ENCODE measurements at regions of chr12 and their contacts with region 1.

Region 1: DNA sequence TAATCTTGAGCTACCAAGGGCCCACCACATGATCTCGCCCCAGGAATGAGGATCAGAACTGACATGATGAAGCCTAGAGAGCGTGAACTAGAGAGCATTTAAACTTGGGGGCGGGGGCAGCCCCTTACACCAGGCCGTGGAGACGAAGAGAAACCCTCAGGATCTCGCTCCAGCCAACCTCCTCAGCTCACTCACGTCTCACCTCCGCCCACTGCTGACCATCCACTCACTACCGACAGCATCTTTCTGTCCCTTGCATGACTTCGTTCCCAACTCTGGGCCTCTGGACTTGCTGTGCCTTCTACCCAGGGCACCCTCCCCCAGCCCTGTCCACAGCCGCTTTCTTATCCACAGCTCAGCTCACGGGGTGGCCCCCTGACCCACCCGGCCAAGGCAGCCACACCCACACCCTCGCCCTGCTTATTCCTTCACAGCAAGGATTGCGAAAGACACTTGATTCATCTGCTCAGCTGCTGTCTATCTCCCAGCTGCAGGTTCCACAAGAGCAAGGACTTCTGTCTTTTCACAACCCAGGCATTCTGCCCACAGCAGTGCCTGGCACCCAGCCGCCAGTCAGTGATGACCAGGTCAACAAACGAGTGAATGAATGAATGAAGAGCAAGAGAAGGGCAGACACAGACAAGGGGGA is 6.4 kb downstream of the STX2 start:
- DNase-seq: peak; percentile 80
- H3K4me3 Mint-ChIP-seq: peak overlapping the region; percentile 5
- H3K27ac Mint-ChIP-seq: no peak overlapping the region
- H3K4me1 Mint-ChIP-seq: peaks cover 19% of the 10 kb centered on the region
- H3K27me3 Mint-ChIP-seq: no peaks in the 10 kb centered on the region
- CTCF ChIP-seq: no peak

Region 2: DNA sequence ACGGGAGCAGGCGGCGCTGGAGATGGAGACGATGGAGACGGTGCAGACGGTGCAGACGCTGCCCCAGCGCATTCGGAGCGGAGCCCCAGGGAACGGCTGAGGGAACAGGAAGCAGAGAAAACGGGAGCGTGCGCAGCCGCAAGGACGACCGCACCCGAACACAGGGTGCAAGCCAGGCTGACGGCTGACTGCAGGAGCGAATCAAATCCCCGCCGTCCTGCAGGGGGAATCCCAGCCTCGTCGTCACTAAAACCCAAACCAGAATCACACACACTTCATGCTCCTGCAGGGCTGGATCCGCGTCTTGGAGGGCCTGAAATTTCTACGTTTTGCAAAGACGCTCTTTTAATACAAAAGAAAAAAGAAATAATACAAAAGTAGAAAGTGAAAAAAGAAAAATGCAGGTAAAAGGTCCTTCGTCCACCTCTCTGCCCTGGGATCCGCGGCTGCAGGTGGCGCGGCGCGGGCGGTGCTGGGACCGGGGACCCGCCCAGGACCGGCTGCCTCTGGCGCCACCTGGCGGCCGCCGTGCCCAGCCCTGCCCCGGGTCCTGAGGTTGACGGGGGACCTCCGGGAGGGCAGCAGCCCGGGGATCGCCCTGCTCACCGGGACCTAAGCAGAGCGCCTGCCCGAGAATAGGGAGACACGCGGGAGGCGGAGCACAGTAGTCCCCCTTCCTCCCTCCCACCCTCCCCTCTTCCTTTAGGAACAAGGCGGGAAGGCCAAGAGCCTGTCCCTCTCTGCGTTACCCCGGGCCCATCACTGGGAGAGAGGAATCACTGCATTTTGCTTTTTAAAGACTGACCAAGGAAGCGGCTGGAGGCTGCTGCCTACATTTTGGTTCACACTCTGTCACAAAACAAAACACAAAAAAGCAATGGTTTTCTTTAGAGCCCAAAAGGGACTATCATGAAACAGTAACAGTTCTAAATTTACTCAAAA is 13.8 kb before region 1 on chr12:
- CTCF ChIA-PET with region 1: interaction called, 10 read pairs
- POLR2A ChIA-PET with region 1: interaction called, 3 read pairs
- intact Hi-C with region 1: no loop called
- DNase-seq: peak; percentile 36
- H3K4me3 Mint-ChIP-seq: peak overlapping the region; percentile 69
- H3K27ac Mint-ChIP-seq: peak overlapping the region; percentile 49
- H3K4me1 Mint-ChIP-seq: peaks cover 4% of the 10 kb centered on the region
- H3K27me3 Mint-ChIP-seq: no peaks in the 10 kb centered on the region
- CTCF ChIP-seq: peak; percentile 83

Region 3: DNA sequence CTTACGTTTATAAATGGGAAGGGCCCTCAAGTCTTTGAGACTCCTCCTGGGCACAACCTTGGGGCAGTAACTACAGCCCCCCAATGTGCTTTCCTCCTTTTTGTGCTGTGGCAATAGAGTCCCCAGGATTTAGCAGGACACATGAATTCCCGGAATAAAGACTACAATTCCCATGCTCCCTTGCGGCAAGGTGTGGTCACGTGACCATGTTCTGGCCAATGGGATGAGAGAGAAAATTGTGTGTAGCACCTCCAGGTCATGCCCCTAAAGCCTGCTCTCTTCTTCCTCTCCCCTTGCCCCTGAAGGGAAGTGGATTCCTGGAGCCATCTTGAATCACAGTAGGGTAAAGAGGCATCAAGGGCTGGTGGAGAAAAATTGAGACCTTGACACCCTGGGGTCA is 583.1 kb after region 1 on chr12:
- CTCF ChIA-PET with region 1: no interaction called
- POLR2A ChIA-PET with region 1: no interaction called
- intact Hi-C with region 1: no loop called
- DNase-seq: peak; percentile 38
- H3K4me3 Mint-ChIP-seq: no peak overlapping the region
- H3K27ac Mint-ChIP-seq: no peak overlapping the region
- H3K4me1 Mint-ChIP-seq: no peaks in the 10 kb centered on the region
- H3K27me3 Mint-ChIP-seq: peaks cover 30% of the 10 kb centered on the region
- CTCF ChIP-seq: no peak

Measured in MCF 10A (cell line).